Left lung (tissue), 14 donors: ENCODE measurements at regions of chr19 and their contacts with region 1.

Region 1: GRCh38 chr19:11293433-11294389 is 2.2 kb upstream of the TSPAN16 start:
- DNase-seq: peak; percentile 89 to 100 (median 96)
- ATAC-seq: peak; percentile 100
- H3K4me3 ChIP-seq: peak overlapping the region; percentile 10 to 14
- H3K27ac ChIP-seq: peak overlapping the region; percentile 39 to 73
- H3K4me1 ChIP-seq: peaks cover 0 to 51% of the 10 kb centered on the region in 2 donors
- H3K27me3 ChIP-seq: no peaks in the 10 kb centered on the region
- CTCF ChIP-seq: peak; percentile 94 to 99

Region 2: DNA sequence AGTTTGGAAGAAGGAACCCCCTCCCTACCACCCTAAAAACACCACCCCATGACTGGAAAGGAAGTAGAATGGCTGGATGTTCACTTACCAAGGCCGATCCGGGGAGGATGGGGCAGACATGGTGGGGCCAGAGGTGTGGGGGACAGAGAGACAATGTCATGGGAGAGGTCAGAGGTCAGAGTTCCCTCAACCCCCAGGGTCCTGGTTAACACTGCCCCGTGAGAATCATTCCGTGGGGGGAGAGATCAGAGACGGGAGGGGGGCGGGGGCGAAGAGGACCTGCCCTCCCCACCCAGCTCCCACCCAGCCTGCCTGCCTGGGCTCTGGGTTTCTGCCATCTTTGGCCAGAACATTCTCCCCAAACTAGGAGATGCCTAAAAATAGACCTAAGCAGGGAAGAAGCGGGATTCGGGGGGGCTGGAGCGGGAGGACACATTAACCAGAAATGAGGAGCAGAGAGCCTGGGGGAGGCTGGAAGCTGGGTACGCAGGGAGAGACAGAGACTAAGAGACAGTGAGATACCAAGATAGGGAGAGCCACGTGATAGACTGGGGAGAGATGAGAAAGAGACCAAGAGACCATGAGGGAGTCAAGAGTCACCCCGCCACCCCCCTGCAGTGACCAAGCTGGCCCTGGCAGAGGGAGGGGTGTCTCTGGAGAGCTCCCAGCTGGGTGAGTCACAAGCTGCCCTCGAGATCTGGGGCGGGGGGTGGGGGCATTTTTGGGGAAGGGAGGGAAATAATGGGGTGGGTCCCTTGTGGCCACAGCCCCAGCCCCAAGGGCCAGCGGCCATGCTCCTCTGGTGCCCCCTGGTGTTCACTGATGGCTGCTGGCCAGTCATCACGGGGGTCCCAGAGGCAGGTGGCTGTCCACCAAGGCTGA is 90.3 kb before region 1 on chr19:
- intact Hi-C with region 1: no loop called
- DNase-seq: peak; percentile 79 to 94 (median 86)
- ATAC-seq: peak; percentile 78
- H3K4me3 ChIP-seq: no peak overlapping the region
- H3K27ac ChIP-seq: peak overlapping the region; percentile 28 to 62
- H3K4me1 ChIP-seq: peaks cover under 1 to 20% of the 10 kb centered on the region in 2 donors
- H3K27me3 ChIP-seq: no peaks in the 10 kb centered on the region
- CTCF ChIP-seq: peak; percentile 75 to 80

Region 3: DNA sequence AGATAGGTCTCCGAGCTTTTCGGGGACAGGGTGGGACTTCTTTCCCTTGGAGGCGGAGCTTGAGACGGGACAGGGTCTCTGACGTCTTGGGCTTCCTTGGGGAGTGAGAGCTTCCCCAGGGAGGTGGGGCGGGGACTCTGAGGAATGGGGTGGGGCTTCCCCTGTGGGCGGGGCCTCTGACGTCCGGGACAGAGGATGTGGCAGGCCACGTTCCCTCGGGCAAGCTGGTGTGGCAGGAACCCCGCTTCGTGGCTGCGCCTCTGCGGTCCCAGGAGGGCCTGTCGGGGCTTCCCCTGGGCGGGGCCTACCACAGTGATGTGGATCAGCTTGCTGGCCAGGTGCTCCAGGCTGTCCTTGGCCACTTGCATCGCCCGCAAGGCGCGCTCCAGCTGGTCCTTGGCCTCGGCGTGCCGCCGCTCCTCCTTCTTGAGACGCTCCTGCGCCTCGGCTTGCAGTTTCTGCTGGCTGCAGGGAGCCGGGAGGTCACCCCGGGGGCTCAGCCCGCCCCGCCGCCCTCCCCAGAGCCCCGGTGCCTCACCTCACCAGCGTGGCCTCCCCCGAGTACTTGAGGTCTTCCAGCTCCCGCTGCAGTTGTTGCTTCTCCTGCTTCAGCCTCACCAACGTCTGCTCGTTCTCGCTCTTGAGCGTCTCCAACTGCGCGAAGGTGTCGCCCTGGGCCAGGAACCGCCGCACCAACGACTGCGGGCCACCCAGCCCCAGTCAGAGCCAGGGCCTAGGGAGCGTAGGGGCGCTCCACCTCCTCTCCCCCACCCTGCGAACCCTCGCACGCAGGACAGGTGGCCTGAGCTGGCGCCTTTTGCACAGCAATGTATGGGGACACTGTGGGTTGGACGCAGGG is 128.7 kb after region 1 on chr19:
- intact Hi-C with region 1: no loop called
- DNase-seq: peak in 3 of 4 donors; percentile 58 to 95 (median 92)
- ATAC-seq: peak; percentile 83
- H3K4me3 ChIP-seq: peak overlapping the region; percentile 25 to 28
- H3K27ac ChIP-seq: peak overlapping the region; percentile 20 to 44
- H3K4me1 ChIP-seq: peaks cover 17 to 45% of the 10 kb centered on the region in 2 donors
- H3K27me3 ChIP-seq: peaks cover 4 to 68% of the 10 kb centered on the region in 2 donors
- CTCF ChIP-seq: no peak

Region 4: GRCh38 chr19:11446652-11447301 is 153.1 kb after region 1 on chr19:
- intact Hi-C with region 1: loop called in 1 of 2 experiments (anchors 10 kb)
- DNase-seq: peak in 1 of 4 donors; percentile 93
- ATAC-seq: peak; percentile 84
- H3K4me3 ChIP-seq: no peak overlapping the region
- H3K27ac ChIP-seq: no peak overlapping the region
- H3K4me1 ChIP-seq: no peaks in the 10 kb centered on the region
- H3K27me3 ChIP-seq: no peaks in the 10 kb centered on the region
- CTCF ChIP-seq: peak; percentile 69 to 83

Region 5: DNA sequence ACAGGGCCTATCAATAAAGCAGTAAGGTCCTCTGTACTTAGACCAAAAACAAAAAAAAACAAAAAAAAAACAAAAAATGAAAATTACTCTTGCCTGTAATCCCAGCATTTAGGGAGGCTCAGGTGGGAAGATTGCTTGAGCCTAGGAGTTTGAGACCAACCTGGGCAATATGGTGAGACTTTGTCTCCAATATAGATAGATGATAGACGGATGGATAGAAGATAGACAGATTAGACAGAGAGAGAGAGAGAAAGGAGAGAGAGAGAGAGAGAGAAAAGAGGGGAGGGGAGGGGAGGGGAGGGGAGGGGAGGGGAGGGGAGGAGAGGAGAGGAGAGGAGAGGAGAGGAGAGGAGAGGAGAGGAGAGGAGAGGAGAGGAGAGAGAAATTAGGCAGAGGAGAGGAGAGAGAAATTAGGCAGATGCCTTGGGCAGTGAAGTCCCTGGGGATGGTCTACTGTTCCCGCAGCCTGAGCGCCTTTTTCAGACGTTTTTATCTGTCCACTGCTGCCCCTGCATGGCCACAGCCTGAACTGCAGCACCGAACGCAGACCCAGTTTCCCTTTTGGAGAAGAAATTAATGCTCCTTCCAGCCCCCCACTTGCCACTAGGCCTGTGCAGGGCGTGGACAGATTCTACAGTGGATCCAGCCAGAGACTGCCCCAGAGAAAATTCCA is 293.7 kb after region 1 on chr19:
- intact Hi-C with region 1: loop called in 1 of 2 experiments (anchors 10 kb)
- DNase-seq: peak; percentile 44 to 89 (median 72)
- ATAC-seq: peak; percentile 98
- H3K4me3 ChIP-seq: no peak overlapping the region
- H3K27ac ChIP-seq: no peak overlapping the region
- H3K4me1 ChIP-seq: peaks cover 0 to 25% of the 10 kb centered on the region in 2 donors
- H3K27me3 ChIP-seq: no peaks in the 10 kb centered on the region
- CTCF ChIP-seq: peak; percentile 79 to 87